CD8-positive, alpha-beta T cell (primary cell): ENCODE measurements at regions of chr17 and their contacts with region 1.

Region 1: DNA sequence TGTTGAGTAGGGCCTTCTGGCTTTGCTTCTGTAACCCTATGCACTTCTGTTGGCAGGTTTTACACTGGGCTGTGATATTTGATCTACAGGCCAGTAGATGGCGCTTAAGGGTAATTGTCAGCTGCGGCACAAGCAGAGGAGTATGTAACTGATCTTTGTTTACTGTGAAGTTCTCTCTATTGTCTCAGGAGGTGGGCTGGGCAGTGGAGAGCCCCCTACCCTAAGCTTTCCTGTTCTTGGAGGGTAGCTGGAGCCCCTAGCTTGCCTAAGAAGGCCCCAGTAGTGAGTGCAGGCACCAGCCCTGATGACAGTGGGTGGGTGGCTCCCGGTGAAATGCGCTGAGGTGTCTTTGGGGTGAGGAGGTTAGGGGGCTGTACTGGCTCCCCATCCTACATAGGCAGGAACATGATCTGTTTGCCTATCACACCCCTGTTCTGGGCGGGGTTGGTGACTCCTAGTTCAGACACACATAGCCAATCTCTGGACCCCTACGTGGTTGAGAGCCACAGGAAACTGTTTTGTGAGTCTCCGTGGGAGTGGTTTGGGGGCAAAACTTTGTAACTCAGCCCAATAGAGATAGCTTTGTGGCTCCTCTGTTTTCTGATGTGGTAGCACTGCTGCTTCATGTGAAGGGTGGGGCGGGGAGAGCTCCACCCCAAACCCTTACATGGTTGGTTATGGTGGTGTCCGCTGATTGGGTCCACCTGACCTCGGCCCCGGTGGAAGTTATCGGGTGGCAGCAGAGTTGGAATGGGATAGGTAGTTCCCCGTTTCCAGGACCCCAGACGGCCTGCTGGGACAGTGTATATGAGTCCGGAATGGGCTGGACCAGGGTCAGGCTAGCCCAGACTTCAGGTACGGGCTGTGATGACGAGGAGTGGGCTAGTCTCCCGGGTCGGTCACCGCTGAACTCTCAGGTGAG is 60.4 kb downstream of the SLFN11 start:
- DNase-seq: peak; percentile 77 to 99 (median 88)
- ATAC-seq: peak; percentile 92
- H3K4me3 ChIP-seq: peak overlapping the region; percentile 73 to 84
- H3K4me3 Mint-ChIP-seq: peak overlapping the region; percentile 97
- H3K27ac ChIP-seq: peak overlapping the region; percentile 75 to 86
- H3K27ac Mint-ChIP-seq: peak overlapping the region; percentile 98
- H3K4me1 ChIP-seq: peaks cover 26% of the 10 kb centered on the region
- H3K4me1 Mint-ChIP-seq: peaks cover 57% of the 10 kb centered on the region
- H3K27me3 ChIP-seq: no peaks in the 10 kb centered on the region
- H3K27me3 Mint-ChIP-seq: no peaks in the 10 kb centered on the region
- CTCF ChIP-seq: peak; percentile 88

Region 2: DNA sequence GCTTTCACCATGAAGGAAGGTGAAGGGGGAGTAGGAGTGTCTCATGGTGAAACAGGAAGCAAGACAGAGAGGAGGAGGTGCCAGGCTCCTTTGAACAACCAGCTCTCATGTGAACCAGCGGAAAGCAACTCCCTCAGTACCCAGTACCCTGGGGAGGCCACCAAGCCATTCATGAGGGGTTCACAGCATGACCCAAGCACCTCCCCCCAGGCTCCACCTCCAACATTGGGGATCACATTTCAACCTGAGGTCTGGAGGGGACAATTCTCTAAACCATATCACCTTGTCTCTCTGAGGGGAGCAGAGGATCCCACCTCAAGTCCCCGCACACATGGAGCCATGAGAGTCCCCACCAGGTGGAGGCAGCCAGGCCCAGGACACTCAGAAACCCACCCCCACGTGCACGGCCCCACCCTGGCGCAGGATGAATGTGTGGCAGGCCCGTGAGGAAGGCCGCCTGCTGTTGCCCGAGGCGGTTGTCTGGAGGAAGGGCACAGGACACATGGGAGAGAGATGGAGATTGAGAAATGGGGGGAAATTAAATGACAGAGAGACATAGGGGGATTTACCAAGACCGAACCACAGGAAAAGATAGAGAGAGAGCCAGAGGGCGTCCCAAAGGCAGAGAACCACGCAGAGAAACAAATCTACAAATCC is 647.8 kb before region 1 on chr17:
- CTCF ChIA-PET with region 1: no interaction called
- POLR2A ChIA-PET with region 1: no interaction called
- intact Hi-C with region 1: no loop called
- DNase-seq: peak in 2 of 9 experiments; percentile 16 to 50
- ATAC-seq: peak; percentile 40
- H3K4me3 ChIP-seq: no peak overlapping the region
- H3K4me3 Mint-ChIP-seq: peak overlapping the region; percentile 35
- H3K27ac ChIP-seq: no peak overlapping the region
- H3K27ac Mint-ChIP-seq: peak overlapping the region; percentile 75
- H3K4me1 ChIP-seq: peaks cover 14% of the 10 kb centered on the region
- H3K4me1 Mint-ChIP-seq: peaks cover 13% of the 10 kb centered on the region
- H3K27me3 ChIP-seq: no peaks in the 10 kb centered on the region
- H3K27me3 Mint-ChIP-seq: peaks cover 18% of the 10 kb centered on the region
- CTCF ChIP-seq: no peak

Region 3: GRCh38 chr17:34980681-34981537 is 332.1 kb before region 1 on chr17:
- CTCF ChIA-PET with region 1: no interaction called
- POLR2A ChIA-PET with region 1: no interaction called
- intact Hi-C with region 1: loop called in 1 of 2 experiments (anchors 2 kb)
- DNase-seq: peak in 8 of 9 experiments; percentile 13 to 90 (median 75)
- ATAC-seq: peak; percentile 84
- H3K4me3 ChIP-seq: peak overlapping the region; percentile 80 to 86
- H3K4me3 Mint-ChIP-seq: peak overlapping the region; percentile 92
- H3K27ac ChIP-seq: peak overlapping the region; percentile 93 to 98
- H3K27ac Mint-ChIP-seq: peak overlapping the region; percentile 98
- H3K4me1 ChIP-seq: peaks cover 26% of the 10 kb centered on the region
- H3K4me1 Mint-ChIP-seq: peaks cover 55% of the 10 kb centered on the region
- H3K27me3 ChIP-seq: no peaks in the 10 kb centered on the region
- H3K27me3 Mint-ChIP-seq: no peaks in the 10 kb centered on the region
- CTCF ChIP-seq: no peak

Region 4: DNA sequence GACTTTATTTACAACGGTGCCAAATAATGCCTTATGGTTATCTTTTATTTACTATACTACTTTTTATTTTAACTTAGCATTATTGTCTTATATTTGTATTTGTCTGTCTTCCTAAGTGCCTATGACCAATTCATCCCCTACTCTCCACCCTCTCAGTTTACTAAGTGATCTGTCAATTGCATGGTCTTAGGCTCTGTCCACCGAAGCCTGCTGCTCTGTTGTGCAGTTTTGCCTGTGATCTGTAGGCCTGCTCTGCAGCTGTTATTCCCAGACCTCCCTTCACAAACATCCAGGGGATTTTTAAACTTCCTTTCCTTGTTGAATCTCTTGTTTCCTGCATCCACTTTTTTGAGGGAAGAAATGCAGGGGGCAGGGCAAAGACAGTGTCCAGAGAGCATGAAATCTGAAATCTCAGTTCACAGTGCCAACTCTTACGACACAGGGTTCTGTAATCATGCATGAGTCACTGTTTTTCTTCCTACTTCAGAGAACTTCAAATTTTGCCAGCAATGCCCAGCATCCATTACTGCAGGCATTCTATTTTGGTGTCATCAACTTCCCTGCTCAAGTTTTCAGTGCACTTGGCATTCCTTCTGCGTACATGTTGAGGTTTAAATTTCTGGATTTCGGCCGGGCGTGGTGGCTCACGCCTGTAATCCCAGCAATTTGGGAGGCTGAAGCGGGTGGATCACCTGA is 58.8 kb before region 1 on chr17:
- CTCF ChIA-PET with region 1: interaction called, 11 read pairs
- POLR2A ChIA-PET with region 1: interaction called, 9 read pairs
- intact Hi-C with region 1: no loop called
- DNase-seq: peak in 1 of 9 experiments; percentile 28
- ATAC-seq: no peak
- H3K4me3 ChIP-seq: no peak overlapping the region
- H3K4me3 Mint-ChIP-seq: no peak overlapping the region
- H3K27ac ChIP-seq: no peak overlapping the region
- H3K27ac Mint-ChIP-seq: peak overlapping the region; percentile 91
- H3K4me1 ChIP-seq: peaks cover 66% of the 10 kb centered on the region
- H3K4me1 Mint-ChIP-seq: peaks cover 90% of the 10 kb centered on the region
- H3K27me3 ChIP-seq: no peaks in the 10 kb centered on the region
- H3K27me3 Mint-ChIP-seq: no peaks in the 10 kb centered on the region
- CTCF ChIP-seq: no peak

Region 5: GRCh38 chr17:35299129-35299528 is 13.9 kb before region 1 on chr17:
- CTCF ChIA-PET with region 1: interaction called, 13 read pairs
- POLR2A ChIA-PET with region 1: interaction called, 4 read pairs
- intact Hi-C with region 1: no loop called
- DNase-seq: no peak
- ATAC-seq: no peak
- H3K4me3 ChIP-seq: no peak overlapping the region
- H3K4me3 Mint-ChIP-seq: no peak overlapping the region
- H3K27ac ChIP-seq: no peak overlapping the region
- H3K27ac Mint-ChIP-seq: no peak overlapping the region
- H3K4me1 ChIP-seq: no peaks in the 10 kb centered on the region
- H3K4me1 Mint-ChIP-seq: peaks cover 11% of the 10 kb centered on the region
- H3K27me3 ChIP-seq: no peaks in the 10 kb centered on the region
- H3K27me3 Mint-ChIP-seq: no peaks in the 10 kb centered on the region
- CTCF ChIP-seq: no peak

Region 6: DNA sequence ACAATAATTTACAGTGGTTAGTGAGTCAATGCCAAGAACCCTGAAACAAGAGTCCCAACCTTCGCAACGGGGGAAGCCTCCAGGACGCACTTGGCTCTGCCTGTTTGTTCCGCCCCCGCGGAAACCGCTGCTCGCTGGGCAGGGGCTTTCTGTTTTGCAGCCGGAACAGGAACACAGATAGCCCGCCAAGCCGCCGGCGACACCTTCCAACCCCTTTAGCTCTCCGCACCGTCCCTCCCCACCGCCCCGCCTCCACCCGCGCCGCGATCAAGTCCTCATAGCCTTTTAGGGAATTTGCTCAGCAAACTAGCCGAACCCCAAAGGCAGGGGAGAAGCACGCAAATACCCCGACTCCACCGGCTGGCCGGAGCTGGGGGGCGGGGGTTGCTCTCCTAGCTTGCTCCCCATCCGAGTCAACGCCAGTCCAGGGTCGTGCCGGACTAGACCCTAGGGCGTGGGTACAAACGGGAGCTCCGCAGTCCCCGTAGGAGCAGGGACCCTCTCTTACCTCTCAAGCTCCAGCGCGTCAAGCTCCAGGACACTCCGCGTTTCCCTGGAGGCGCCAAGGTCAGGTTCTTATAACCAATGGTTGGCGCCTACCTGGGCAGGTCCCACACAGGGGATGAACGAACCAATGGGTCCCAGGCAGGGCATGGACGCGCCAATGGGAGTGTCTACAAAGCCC is 135.3 kb after region 1 on chr17 and contains the start of gene SLFN13:
- CTCF ChIA-PET with region 1: interaction called, 6 read pairs
- POLR2A ChIA-PET with region 1: interaction called, 3 read pairs
- intact Hi-C with region 1: loop called in 1 of 2 experiments (anchors 5 kb)
- DNase-seq: peak; percentile 58 to 93 (median 84)
- ATAC-seq: peak; percentile 90
- H3K4me3 ChIP-seq: peak within 1 kb of the TSS; percentile 57 to 70
- H3K4me3 Mint-ChIP-seq: peak within 1 kb of the TSS; percentile 87
- H3K27ac ChIP-seq: peak within 1 kb of the TSS; percentile 51 to 58
- H3K27ac Mint-ChIP-seq: peak within 1 kb of the TSS; percentile 93
- H3K4me1 ChIP-seq: peaks cover 16% of the 10 kb centered on the region
- H3K4me1 Mint-ChIP-seq: peaks cover 19% of the 10 kb centered on the region
- H3K27me3 ChIP-seq: no peaks in the 10 kb centered on the region
- H3K27me3 Mint-ChIP-seq: no peaks in the 10 kb centered on the region
- CTCF ChIP-seq: no peak
- total RNA-seq, gene SLFN13: 16.1 to 17.3 TPM

Region 7: DNA sequence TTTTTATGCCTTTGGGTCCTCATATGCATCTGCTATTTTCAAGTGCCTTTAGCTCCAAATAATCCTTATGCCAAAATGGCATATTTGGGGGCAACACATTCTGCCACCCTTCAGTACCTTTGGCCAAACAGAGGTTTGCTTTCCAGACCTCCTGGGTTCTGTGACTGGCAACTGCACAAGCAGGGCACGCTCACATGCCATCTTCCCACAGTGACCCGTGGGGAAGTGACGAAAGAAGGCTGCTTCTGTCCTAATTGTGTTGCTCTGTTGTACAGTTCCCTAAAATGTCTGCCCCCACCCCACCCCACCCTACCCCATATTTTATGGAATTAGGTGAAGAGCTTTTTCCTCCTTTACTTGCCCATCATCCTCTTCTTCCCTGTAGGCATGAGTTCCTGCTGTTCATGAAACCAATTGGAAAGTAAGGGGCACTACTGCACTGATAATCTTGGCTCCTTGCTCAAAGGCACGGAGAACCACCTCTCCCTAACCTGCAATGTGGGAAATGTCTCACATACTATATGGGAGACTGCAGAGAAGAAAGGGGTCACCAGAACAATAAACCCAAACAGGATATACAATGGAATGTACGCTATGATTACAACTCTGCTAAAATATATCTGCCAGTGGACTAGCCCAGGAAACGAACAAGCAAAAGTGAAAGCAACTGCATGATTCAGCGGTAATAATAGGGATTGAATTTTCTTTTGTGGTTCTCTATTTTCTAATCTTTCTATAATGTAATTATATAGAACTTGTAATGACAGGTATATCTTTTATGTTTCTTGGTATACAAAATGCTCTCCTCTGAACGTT is 227.7 kb after region 1 on chr17:
- CTCF ChIA-PET with region 1: interaction called, 184 read pairs
- POLR2A ChIA-PET with region 1: interaction called, 122 read pairs
- intact Hi-C with region 1: loop called in 1 of 2 experiments (anchors 1 kb)
- DNase-seq: peak in 7 of 9 experiments; percentile 17 to 76 (median 47)
- ATAC-seq: peak; percentile 34
- H3K4me3 ChIP-seq: peak overlapping the region; percentile 56 to 59
- H3K4me3 Mint-ChIP-seq: peak overlapping the region; percentile 88
- H3K27ac ChIP-seq: peak overlapping the region; percentile 63 to 89
- H3K27ac Mint-ChIP-seq: peak overlapping the region; percentile 93
- H3K4me1 ChIP-seq: peaks cover 31% of the 10 kb centered on the region
- H3K4me1 Mint-ChIP-seq: peaks cover 49% of the 10 kb centered on the region
- H3K27me3 ChIP-seq: no peaks in the 10 kb centered on the region
- H3K27me3 Mint-ChIP-seq: no peaks in the 10 kb centered on the region
- CTCF ChIP-seq: no peak